Activated CD4-positive, alpha-beta T cell treated with anti-CD3 and anti-CD28 coated beads for 36 hours (primary cell): ENCODE measurements at regions of chr3 and their contacts with region 1.

Region 1: DNA sequence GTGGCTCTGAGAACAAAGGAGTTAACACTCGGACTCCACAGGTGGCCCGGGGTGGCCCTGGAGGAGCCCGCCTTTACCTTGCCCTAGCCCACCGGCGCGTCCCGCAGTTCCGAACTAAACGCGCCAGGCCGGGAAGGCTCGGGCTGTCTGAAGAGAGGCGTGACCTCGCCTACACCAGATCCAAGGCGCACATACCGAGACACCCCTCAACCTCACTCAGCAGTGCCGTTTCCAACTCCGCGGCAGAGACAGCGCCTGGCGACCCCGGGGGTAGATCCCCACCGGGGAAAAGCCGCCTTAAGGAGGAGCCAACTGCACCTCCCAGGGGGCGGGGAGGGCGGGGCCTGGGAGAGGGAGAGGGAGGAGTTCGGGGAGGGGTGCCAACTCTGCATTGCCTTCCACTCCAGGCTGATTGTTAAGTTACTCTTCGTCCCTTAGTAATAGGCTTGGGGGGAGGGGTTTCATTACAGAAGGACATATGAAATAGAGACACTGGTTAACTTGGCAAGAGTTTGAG is at the start of gene DLG1:
- DNase-seq: peak; percentile 93
- ATAC-seq: peak; percentile 81
- H3K4me3 Mint-ChIP-seq: peak within 1 kb of the TSS; percentile 92
- H3K27ac Mint-ChIP-seq: peak within 1 kb of the TSS; percentile 93
- H3K4me1 Mint-ChIP-seq: peaks cover 23% of the 10 kb centered on the region
- H3K27me3 Mint-ChIP-seq: peaks cover 20% of the 10 kb centered on the region
- total RNA-seq, gene DLG1: 58.8 to 78.4 TPM

Region 2: GRCh38 chr3:195894780-195895607 is 1403.4 kb before region 1 on chr3:
- CTCF ChIA-PET with region 1: no interaction called
- POLR2A ChIA-PET with region 1: no interaction called
- intact Hi-C with region 1: loop called in 1 of 2 experiments (anchors 5 kb)
- DNase-seq: peak; percentile 86
- ATAC-seq: peak; percentile 79
- H3K4me3 Mint-ChIP-seq: peak overlapping the region; percentile 83
- H3K27ac Mint-ChIP-seq: peak overlapping the region; percentile 88
- H3K4me1 Mint-ChIP-seq: peaks cover 42% of the 10 kb centered on the region
- H3K27me3 Mint-ChIP-seq: no peaks in the 10 kb centered on the region

Region 3: GRCh38 chr3:196867507-196868296 is 430.7 kb before region 1 on chr3 and contains the start of gene SENP5:
- CTCF ChIA-PET with region 1: no interaction called
- POLR2A ChIA-PET with region 1: no interaction called
- intact Hi-C with region 1: loop called in 1 of 2 experiments (anchors 1 kb)
- DNase-seq: peak; percentile 95
- ATAC-seq: peak; percentile 96
- H3K4me3 Mint-ChIP-seq: peak within 1 kb of the TSS; percentile 99
- H3K27ac Mint-ChIP-seq: peak within 1 kb of the TSS; percentile 95
- H3K4me1 Mint-ChIP-seq: peaks cover 24% of the 10 kb centered on the region
- H3K27me3 Mint-ChIP-seq: no peaks in the 10 kb centered on the region
- total RNA-seq, gene SENP5: 27.7 to 33.0 TPM

Region 4: GRCh38 chr3:197002701-197003454 is 295.5 kb before region 1 on chr3:
- CTCF ChIA-PET with region 1: no interaction called
- POLR2A ChIA-PET with region 1: interaction called, 4 read pairs
- intact Hi-C with region 1: loop called in 1 of 2 experiments (anchors 2 kb)
- DNase-seq: peak; percentile 90
- ATAC-seq: peak; percentile 81
- H3K4me3 Mint-ChIP-seq: peak overlapping the region; percentile 71
- H3K27ac Mint-ChIP-seq: no peak overlapping the region
- H3K4me1 Mint-ChIP-seq: peaks cover 9% of the 10 kb centered on the region
- H3K27me3 Mint-ChIP-seq: no peaks in the 10 kb centered on the region

Region 5: GRCh38 chr3:197456261-197457091 is 158.1 kb after region 1 on chr3:
- CTCF ChIA-PET with region 1: no interaction called
- POLR2A ChIA-PET with region 1: no interaction called
- intact Hi-C with region 1: loop called (anchors 2 to 5 kb)
- DNase-seq: peak; percentile 77
- ATAC-seq: peak; percentile 55
- H3K4me3 Mint-ChIP-seq: peak overlapping the region; percentile 76
- H3K27ac Mint-ChIP-seq: peak overlapping the region; percentile 93
- H3K4me1 Mint-ChIP-seq: peaks cover 21% of the 10 kb centered on the region
- H3K27me3 Mint-ChIP-seq: peaks cover 6% of the 10 kb centered on the region

Region 6: DNA sequence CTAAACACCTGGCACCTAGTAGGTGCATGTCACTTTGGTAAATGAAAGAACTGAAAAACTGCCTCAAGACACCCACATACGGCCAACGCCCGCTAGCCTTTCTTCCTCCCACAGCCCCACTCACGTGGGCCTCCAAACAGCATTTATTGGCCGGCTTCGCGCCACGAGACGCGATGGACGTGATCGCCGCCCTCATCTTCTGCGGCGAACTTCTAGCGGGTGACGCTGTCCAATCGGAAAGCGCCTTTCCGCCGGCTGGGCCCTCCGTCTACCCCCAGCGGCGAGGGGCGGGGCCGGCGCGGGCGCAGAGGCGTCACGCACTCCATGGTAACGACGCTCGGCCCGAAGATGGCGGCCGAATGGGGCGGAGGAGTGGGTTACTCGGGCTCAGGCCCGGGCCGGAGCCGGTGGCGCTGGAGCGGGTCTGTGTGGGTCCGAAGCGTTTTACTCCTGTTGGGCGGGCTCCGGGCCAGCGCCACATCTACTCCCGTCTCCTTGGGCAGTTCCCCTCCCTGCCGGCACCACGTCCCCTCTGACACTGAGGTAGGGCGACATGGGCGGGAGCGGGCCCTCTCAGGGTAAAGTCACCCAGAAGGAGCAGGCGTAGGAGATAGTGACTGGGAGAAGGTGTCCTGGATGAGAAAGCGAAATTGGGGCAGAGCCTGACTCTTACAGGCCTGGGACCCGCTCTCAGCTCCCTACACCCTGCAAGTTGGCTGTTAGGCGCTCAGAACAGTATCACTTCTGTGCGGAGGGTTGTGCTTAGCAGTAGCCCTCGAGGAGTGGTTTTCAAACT is 661.7 kb after region 1 on chr3 and contains the start of gene LMLN:
- CTCF ChIA-PET with region 1: no interaction called
- POLR2A ChIA-PET with region 1: no interaction called
- intact Hi-C with region 1: loop called in 1 of 2 experiments (anchors 5 kb)
- DNase-seq: peak; percentile 98
- ATAC-seq: peak; percentile 91
- H3K4me3 Mint-ChIP-seq: peak within 1 kb of the TSS; percentile 84
- H3K27ac Mint-ChIP-seq: peak within 1 kb of the TSS; percentile 96
- H3K4me1 Mint-ChIP-seq: peaks cover 52% of the 10 kb centered on the region
- H3K27me3 Mint-ChIP-seq: no peaks in the 10 kb centered on the region
- total RNA-seq, gene LMLN: 4.3 to 7.7 TPM

Region 7: DNA sequence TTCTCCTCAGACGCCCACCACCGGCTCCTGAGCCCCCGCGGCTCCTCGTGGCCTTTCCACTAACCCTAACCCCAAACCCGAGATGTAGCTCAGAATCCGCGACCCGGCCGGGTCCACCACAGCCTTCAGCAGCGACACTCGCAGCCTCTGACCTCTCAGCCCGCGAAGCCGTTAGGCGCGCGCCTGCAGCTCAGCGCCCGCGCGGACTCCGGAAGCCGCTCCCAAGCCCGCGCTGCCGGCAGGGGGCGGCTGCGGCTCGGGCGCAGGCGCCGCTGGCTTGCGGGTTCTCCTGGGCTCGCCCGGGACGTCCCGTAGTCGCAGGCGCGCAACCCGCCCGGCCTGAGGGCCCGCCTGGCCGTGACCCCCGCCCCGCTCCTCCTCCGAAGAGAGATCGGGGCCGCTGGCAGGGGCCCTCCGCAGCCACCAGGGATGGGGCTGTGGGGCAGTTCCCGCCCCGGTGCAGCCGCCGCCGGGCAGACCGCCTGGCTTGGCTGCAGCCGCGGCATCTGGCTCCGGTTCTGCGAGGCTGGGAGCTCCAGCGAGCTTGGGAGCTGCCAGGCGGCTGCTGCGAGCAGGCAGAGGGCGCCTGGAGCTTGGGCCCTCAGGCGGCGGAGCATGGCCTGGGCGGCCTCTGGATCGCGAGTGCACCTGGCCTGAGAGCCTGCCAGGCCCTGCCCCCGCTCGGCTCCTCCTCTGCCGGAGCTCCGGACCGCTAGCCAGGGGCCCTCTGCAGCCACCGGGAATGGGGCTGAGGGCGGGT is 782.3 kb after region 1 on chr3:
- CTCF ChIA-PET with region 1: no interaction called
- POLR2A ChIA-PET with region 1: no interaction called
- intact Hi-C with region 1: loop called in 1 of 2 experiments (anchors 10 kb)
- DNase-seq: peak; percentile 90
- ATAC-seq: peak; percentile 80
- H3K4me3 Mint-ChIP-seq: peak overlapping the region; percentile 85
- H3K27ac Mint-ChIP-seq: peak overlapping the region; percentile 93
- H3K4me1 Mint-ChIP-seq: peaks cover 22% of the 10 kb centered on the region
- H3K27me3 Mint-ChIP-seq: peaks cover 40% of the 10 kb centered on the region